MCF 10A (cell line): ENCODE measurements at regions of chr1 and their contacts with region 1.

Region 1: GRCh38 chr1:56189946-56190792 is 389.2 kb downstream of the PLPP3 start:
- DNase-seq: peak; percentile 27
- H3K4me3 Mint-ChIP-seq: no peak overlapping the region
- H3K27ac Mint-ChIP-seq: no peak overlapping the region
- H3K4me1 Mint-ChIP-seq: peaks cover 28% of the 10 kb centered on the region
- H3K27me3 Mint-ChIP-seq: no peaks in the 10 kb centered on the region
- CTCF ChIP-seq: no peak

Region 2: GRCh38 chr1:55456971-55457370 is 733.2 kb before region 1 on chr1:
- CTCF ChIA-PET with region 1: no interaction called
- POLR2A ChIA-PET with region 1: no interaction called
- intact Hi-C with region 1: no loop called
- DNase-seq: no peak
- H3K4me3 Mint-ChIP-seq: no peak overlapping the region
- H3K27ac Mint-ChIP-seq: no peak overlapping the region
- H3K4me1 Mint-ChIP-seq: no peaks in the 10 kb centered on the region
- H3K27me3 Mint-ChIP-seq: no peaks in the 10 kb centered on the region
- CTCF ChIP-seq: no peak

Region 3: DNA sequence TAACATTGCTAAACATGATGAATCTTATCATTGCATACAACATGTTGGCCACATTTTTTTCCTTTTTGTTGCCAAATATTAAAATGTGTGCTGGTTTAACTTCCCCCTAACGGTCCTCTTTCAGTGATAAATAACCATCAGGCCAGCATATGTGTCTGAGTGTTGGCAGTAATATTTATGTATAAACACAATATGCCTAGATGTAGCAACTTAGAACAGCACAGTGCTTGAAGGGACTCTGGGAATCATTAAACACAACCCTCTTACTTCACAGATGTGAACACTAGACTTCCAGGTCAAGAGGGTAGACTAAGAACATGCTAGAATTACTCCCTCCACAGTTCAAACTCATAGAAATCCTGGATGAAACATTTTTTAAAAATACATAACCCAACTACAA is 192.6 kb before region 1 on chr1:
- CTCF ChIA-PET with region 1: no interaction called
- POLR2A ChIA-PET with region 1: no interaction called
- intact Hi-C with region 1: no loop called
- DNase-seq: no peak
- H3K4me3 Mint-ChIP-seq: no peak overlapping the region
- H3K27ac Mint-ChIP-seq: no peak overlapping the region
- H3K4me1 Mint-ChIP-seq: no peaks in the 10 kb centered on the region
- H3K27me3 Mint-ChIP-seq: no peaks in the 10 kb centered on the region
- CTCF ChIP-seq: no peak

Region 4: GRCh38 chr1:56200442-56200841 is 10.3 kb after region 1 on chr1:
- CTCF ChIA-PET with region 1: interaction called, 12 read pairs
- POLR2A ChIA-PET with region 1: interaction called, 4 read pairs
- intact Hi-C with region 1: no loop called
- DNase-seq: peak; percentile 67
- H3K4me3 Mint-ChIP-seq: no peak overlapping the region
- H3K27ac Mint-ChIP-seq: no peak overlapping the region
- H3K4me1 Mint-ChIP-seq: peaks cover 13% of the 10 kb centered on the region
- H3K27me3 Mint-ChIP-seq: no peaks in the 10 kb centered on the region
- CTCF ChIP-seq: no peak

Region 5: DNA sequence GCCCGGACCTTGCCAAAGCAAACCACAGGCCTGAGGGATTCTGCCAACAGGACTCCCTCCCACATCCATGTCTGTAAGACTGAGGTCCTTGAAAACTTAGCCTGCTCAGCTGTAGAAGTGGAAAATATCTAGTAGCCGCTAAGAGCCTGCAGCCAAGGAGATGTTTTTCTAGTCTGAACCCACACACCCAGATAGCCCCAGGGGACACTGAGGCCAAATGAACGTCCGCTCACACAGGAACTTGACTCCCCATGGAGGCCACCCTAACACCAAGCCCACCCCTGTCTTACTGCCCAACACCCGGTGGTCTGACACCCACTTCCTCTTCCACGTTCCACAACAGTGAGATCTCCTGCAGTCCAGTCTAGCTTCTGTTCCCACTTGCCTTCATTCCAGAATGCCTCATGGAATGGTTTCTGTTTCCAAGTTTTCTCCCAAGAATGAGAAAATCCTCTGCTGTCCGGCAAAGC is 214.4 kb after region 1 on chr1:
- CTCF ChIA-PET with region 1: no interaction called
- POLR2A ChIA-PET with region 1: no interaction called
- intact Hi-C with region 1: no loop called
- DNase-seq: no peak
- H3K4me3 Mint-ChIP-seq: no peak overlapping the region
- H3K27ac Mint-ChIP-seq: no peak overlapping the region
- H3K4me1 Mint-ChIP-seq: no peaks in the 10 kb centered on the region
- H3K27me3 Mint-ChIP-seq: no peaks in the 10 kb centered on the region
- CTCF ChIP-seq: no peak

Region 6: GRCh38 chr1:56578963-56579875 is 389.1 kb after region 1 on chr1 and contains the start of gene PLPP3:
- CTCF ChIA-PET with region 1: interaction called, 3 read pairs
- POLR2A ChIA-PET with region 1: no interaction called
- intact Hi-C with region 1: loop called (anchors 5 kb)
- DNase-seq: peak; percentile 85
- H3K4me3 Mint-ChIP-seq: peak within 1 kb of the TSS; percentile 97
- H3K27ac Mint-ChIP-seq: peak within 1 kb of the TSS; percentile 33
- H3K4me1 Mint-ChIP-seq: no peaks in the 10 kb centered on the region
- H3K27me3 Mint-ChIP-seq: no peaks in the 10 kb centered on the region
- CTCF ChIP-seq: no peak
- total RNA-seq, gene PLPP3: 0.84 and 1.3 TPM in 2 replicates